ENCODE measurements at regions of chr17 and their contacts with region 1.

Region 1: DNA sequence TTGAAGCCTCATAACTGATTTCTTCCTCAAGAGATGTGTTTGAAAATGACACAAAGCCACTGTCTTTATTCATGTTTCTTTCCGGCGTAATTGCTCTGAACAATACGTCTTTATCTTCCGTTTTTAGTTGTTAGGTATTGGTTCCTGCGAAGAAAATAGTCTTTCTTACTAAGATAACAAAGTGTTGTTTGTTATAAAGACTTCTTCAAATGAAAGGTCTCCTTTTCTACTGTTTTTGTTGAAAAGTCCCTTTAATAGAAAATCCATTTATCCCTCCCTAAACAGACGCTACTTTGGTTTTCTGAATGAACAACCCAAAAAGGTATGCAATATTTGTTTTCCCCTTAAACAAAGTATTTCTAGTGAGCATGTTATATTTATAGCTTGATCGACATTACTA is 469.1 kb downstream of the KCNJ18 start:
- DNase-seq: no peak
- H3K4me3 ChIP-seq: no peak overlapping the region
- H3K27ac ChIP-seq: no peak overlapping the region
- H3K4me1 ChIP-seq: no peaks in the 10 kb centered on the region
- H3K27me3 ChIP-seq: no peaks in the 10 kb centered on the region
- CTCF ChIP-seq: no peak

Region 2: GRCh38 chr17:21674242-21674731 is 487.1 kb before region 1 on chr17:
- CTCF ChIA-PET with region 1: no interaction called
- POLR2A ChIA-PET with region 1: no interaction called
- intact Hi-C with region 1: loop called (anchors 10 kb)
- DNase-seq: no peak
- H3K4me3 ChIP-seq: no peak overlapping the region
- H3K27ac ChIP-seq: no peak overlapping the region
- H3K4me1 ChIP-seq: no peaks in the 10 kb centered on the region
- H3K27me3 ChIP-seq: no peaks in the 10 kb centered on the region
- CTCF ChIP-seq: no peak

Region 3: GRCh38 chr17:22123536-22124281 is 37.7 kb before region 1 on chr17:
- CTCF ChIA-PET with region 1: no interaction called
- POLR2A ChIA-PET with region 1: no interaction called
- intact Hi-C with region 1: loop called (anchors 10 kb)
- DNase-seq: no peak
- H3K4me3 ChIP-seq: no peak overlapping the region
- H3K27ac ChIP-seq: no peak overlapping the region
- H3K4me1 ChIP-seq: no peaks in the 10 kb centered on the region
- H3K27me3 ChIP-seq: no peaks in the 10 kb centered on the region
- CTCF ChIP-seq: no peak

Region 4: GRCh38 chr17:22138861-22139469 is 22.4 kb before region 1 on chr17:
- CTCF ChIA-PET with region 1: no interaction called
- POLR2A ChIA-PET with region 1: no interaction called
- intact Hi-C with region 1: no loop called
- DNase-seq: no peak
- H3K4me3 ChIP-seq: no peak overlapping the region
- H3K27ac ChIP-seq: no peak overlapping the region
- H3K4me1 ChIP-seq: no peaks in the 10 kb centered on the region
- H3K27me3 ChIP-seq: no peaks in the 10 kb centered on the region
- CTCF ChIP-seq: no peak

Region 5: GRCh38 chr17:22193113-22193512 is 31.7 kb after region 1 on chr17:
- CTCF ChIA-PET with region 1: no interaction called
- POLR2A ChIA-PET with region 1: no interaction called
- intact Hi-C with region 1: no loop called
- DNase-seq: no peak
- H3K4me3 ChIP-seq: no peak overlapping the region
- H3K27ac ChIP-seq: no peak overlapping the region
- H3K4me1 ChIP-seq: no peaks in the 10 kb centered on the region
- H3K27me3 ChIP-seq: no peaks in the 10 kb centered on the region
- CTCF ChIP-seq: no peak

Region 6: GRCh38 chr17:22221344-22221743 is 60.0 kb after region 1 on chr17:
- CTCF ChIA-PET with region 1: no interaction called
- POLR2A ChIA-PET with region 1: no interaction called
- intact Hi-C with region 1: loop called (anchors 10 kb)
- DNase-seq: no peak
- H3K4me3 ChIP-seq: no peak overlapping the region
- H3K27ac ChIP-seq: no peak overlapping the region
- H3K4me1 ChIP-seq: no peaks in the 10 kb centered on the region
- H3K27me3 ChIP-seq: no peaks in the 10 kb centered on the region
- CTCF ChIP-seq: no peak

Region 7: DNA sequence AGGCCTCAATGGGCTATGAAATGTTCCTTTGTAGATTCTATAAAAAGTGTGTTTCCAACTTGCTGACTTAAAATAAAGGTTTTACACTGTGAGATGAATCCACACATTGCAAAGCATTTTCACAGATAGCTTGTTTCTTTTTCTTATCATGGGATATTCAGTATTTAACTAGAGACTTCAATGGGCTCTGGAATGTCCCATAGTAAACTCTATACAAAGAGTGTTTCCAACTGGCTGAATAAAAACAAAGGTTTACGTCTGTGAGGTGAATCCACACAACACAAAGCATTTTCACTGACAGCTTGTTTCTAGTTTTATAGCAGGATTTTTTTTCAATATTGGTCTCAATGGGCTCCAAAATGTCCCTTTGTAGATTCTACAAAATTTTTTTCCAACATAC is 81.1 kb after region 1 on chr17:
- CTCF ChIA-PET with region 1: no interaction called
- POLR2A ChIA-PET with region 1: no interaction called
- intact Hi-C with region 1: no loop called
- DNase-seq: no peak
- H3K4me3 ChIP-seq: no peak overlapping the region
- H3K27ac ChIP-seq: no peak overlapping the region
- H3K4me1 ChIP-seq: no peaks in the 10 kb centered on the region
- H3K27me3 ChIP-seq: no peaks in the 10 kb centered on the region
- CTCF ChIP-seq: no peak